ENCODE measurements at regions of chr2 and their contacts with region 1.

Region 1: DNA sequence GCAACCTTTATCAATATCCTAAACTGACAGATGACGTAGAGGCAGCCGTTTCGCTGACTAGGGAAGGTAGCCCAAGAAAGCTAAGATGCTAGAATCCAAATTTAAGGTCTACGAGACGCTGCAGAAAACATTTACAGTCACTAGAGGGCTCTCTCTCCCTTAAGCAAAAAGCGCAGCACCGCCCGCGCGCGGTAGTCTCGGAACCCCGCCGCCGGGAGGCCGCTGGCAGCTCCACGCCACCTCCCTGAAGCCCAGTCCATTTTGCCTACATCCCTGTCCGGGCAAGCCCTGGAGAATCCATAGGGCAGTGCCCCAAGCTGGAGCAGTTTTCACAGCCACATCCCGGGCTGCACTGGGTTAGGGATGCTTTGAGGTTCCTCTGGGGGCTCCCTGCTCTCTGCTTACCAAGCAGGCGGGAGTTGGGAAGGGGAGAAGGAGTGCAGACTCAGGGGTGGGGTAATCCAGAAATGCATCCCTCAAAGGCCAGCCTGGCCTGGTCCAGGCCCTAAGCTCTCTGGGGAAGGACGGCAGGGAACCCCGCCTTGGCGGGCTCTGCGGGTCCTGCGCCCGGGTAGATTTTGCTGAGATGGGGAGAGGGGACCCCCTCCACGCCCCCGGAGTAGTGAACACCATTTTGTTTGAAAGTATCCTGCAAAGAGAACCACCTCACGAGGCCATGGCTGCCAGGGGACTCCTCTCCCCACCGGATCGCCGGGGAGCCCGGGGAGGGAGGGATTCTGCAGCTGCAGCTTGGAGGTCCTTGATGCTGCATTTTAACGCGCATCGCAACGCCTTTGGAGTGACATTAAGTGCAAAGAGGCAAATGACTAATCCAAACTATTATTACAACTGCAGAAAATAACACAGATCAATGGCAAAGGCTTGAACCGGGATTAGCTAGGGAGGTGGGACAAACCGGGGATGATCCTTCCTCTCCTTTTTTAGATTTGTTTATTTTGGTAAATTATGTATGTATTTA is 1.3 kb upstream of the DPYSL5 start:
- DNase-seq: peak; percentile 57
- H3K4me3 ChIP-seq: no peak overlapping the region
- H3K27ac ChIP-seq: no peak overlapping the region
- H3K4me1 ChIP-seq: no peaks in the 10 kb centered on the region
- H3K27me3 ChIP-seq: peaks cover 25% of the 10 kb centered on the region
- CTCF ChIP-seq: peak; percentile 83

Region 2: DNA sequence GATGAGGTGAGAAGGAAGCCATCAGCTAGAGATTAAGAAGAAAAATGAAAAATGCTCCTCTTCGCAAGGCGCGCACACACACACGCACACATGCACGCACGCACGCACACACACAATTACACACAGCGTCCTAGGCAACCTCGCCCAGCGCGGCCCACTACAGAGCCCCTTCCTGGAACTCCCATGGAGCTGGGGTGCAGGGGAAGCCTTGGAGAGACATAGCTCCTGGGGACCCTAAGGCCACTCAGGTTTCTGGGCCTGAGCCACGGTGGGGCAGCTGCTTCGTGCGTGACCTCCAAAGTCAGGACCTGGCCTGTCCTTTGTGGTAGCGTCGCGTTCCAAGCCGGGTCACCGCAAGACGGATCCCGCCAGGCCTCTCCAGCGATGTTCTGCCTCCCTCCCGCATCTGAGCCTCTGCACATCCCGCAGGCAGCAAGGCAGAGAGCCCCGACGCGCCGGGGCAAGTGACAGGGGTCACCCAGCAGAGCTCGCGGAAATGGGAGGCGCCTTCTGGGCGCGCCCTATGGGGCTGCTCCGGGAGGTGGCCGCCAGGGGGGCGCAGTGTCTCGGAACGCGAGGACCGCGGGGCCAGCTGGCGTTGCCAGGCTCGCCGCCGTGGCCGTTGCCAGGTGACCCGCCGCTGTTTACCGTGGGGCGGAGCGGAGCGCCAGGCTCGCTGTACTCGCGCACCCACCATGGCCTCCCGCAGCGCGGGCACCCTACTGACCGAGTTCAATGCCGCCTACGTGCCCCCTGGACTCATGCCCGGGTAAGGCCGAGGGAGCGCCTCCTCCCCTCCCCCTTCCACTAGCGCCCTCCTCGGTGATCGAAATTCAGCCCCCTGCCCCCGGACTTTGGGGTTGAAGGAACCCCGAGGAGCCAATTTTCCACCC is 284.5 kb before region 1 on chr2:
- CTCF ChIA-PET with region 1: no interaction called
- POLR2A ChIA-PET with region 1: no interaction called
- intact Hi-C with region 1: no loop called
- DNase-seq: peak; percentile 51 to 86
- H3K4me3 ChIP-seq: peak overlapping the region; percentile 60
- H3K27ac ChIP-seq: no peak overlapping the region
- H3K4me1 ChIP-seq: peaks cover 10% of the 10 kb centered on the region
- H3K27me3 ChIP-seq: peaks cover 50% of the 10 kb centered on the region
- CTCF ChIP-seq: peak; percentile 55; the same call in 1 of the 2 replicates

Region 3: DNA sequence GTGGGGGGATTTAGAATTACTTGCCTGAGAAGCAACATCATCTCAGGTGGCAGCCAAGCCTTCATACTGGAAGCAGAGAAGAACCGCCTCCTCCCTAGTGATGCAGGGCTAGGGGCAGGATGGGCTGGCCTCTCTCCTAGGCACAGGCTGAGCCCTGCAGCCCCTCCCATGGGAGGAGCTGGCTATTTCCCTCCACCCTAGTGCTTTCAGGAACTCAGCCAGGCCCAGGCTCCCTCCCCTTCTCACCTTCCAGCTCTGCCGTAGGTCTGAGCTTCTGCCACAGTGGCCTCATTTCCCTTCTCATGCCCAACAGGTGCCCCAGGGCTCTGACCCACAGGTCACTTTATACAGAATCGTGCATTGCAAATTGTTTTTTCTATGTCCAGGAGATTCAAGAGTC is 29.7 kb before region 1 on chr2:
- CTCF ChIA-PET with region 1: no interaction called
- POLR2A ChIA-PET with region 1: interaction called, 10 read pairs
- intact Hi-C with region 1: no loop called
- DNase-seq: peak; percentile 51 to 53
- H3K4me3 ChIP-seq: no peak overlapping the region
- H3K27ac ChIP-seq: no peak overlapping the region
- H3K4me1 ChIP-seq: no peaks in the 10 kb centered on the region
- H3K27me3 ChIP-seq: no peaks in the 10 kb centered on the region; the same call in 1 of the 2 replicates
- CTCF ChIP-seq: no peak

Region 4: GRCh38 chr2:26942543-26943295 is 96.1 kb after region 1 on chr2:
- CTCF ChIA-PET with region 1: interaction called, 7 read pairs
- POLR2A ChIA-PET with region 1: no interaction called
- intact Hi-C with region 1: loop called (anchors 5 kb)
- DNase-seq: peak in 1 of 2 experiments; percentile 44
- H3K4me3 ChIP-seq: no peak overlapping the region
- H3K27ac ChIP-seq: no peak overlapping the region
- H3K4me1 ChIP-seq: no peaks in the 10 kb centered on the region; the same call in 1 of the 2 replicates
- H3K27me3 ChIP-seq: 0 out of 2 replicates have a peak, but pooled peaks cover 5% of the 10 kb centered on the region
- CTCF ChIP-seq: peak; percentile 90

Measured in PC-9 (cell line).